Right ventricle myocardium inferior (tissue), 1 donor: ENCODE measurements at regions of chr13 and their contacts with region 1.

Region 1: DNA sequence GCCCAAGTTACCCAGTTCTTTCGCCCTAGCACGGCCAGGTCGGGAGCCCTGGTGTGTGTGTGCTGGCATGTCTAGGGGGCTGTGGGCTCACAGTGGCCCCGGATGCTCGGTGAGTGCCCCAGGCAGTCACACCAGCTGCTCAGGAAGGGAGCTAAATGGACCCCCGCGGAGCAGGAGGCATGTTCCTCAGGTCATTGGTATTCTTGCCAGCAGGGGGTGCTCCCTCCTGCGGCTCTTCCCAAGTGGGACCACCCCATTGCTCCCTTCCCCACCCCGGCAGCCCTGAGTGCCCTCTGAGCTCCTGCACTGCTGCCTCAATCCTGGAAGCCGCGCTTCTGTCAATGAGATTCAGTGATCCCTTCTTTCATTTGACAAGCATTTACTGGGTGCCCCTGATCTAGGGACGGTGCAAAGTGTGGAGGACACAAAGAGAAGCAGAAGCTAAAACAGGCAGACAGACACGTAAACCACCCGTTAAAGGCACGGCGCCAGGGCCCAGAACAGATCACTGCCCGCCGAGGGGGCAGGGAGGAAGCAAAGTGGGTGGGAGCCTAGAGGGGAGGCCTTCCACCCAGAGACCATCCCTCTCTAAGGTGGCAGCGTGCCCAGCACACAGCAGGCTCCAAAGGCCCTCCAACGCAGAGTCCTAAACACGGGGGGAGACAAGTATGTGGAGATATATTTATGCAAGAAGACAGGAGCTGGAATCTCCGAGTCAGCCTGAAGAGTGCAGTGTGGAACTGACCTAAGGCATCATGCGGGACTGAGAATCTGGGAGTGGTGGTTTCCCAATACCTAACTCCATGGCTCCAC is 5.2 kb upstream of the ADPRHL1 start:
- DNase-seq: no peak
- ATAC-seq: peak; percentile 64

Region 2: DNA sequence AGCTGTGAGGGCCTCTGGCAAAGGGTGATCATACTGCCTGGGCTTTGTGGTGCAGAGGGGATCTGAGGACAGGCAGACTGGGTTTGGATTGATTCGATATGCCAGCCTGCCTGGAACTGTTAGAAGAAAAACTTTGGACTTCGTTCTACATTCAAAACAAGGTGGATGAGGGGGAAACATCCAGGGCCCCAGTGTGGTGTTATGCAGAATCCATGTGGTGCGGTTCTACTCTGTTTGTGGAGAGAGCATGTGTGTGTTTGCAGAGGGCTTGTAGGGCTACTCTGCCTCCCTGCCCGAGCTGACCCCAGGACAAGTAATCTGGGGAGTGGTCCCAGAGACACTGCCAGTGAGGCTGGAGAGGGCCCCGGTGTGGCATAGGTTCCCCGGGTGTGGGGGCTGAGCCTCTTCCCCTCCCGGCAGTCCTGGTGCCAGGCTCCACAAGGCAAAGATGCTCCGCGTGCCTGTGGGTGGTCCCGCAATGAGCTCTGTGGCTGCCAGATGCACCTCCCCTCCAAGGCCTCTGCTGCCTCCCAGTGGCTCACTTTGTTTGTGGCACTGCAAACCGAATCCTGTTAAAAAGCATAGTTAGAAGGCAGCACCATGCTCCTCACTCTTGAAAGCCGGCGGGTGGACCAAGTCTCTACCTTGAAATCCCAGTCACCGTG is 103.8 kb after region 1 on chr13:
- intact Hi-C with region 1: loop called (anchors 1 kb)
- DNase-seq: peak; percentile 79
- ATAC-seq: peak; percentile 71